PC-9 (cell line): ENCODE measurements at regions of chr2 and their contacts with region 1.

Region 1: DNA sequence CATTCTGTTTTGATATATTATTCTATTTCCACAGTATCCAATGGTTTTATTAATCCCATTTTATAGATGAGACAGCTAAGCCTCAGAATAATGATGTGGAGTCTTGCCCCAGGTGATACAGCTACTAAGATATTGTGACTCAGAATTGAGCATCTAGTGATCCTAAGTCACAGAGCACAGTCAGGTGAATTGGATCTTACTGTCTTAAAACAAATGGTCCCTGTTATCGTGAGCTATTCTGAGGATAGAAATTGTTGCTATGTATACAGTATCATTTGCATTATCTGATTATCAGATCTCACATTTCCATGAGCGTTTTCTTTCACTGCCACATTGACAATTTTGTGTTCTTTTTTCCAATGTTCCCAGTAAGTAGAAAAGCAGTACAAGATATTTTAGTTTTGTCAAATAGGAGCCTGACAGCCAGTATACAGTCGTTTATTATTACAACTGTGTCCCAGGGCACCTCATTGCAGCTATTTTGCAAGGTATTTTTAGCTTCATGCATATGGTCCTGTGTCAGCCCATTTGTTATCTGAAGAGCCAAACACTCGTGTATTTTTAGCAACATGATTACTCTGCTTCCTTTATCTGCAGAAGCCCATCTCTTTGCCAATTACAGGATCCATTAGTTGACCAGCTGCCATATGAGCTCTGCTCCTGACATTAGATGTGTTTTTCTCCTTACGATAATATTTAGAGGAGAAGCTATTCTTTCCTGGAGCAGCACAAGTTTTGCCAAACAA is 25.1 kb upstream of the SGPP2 start:
- DNase-seq: no peak
- H3K4me3 ChIP-seq: no peak overlapping the region
- H3K27ac ChIP-seq: no peak overlapping the region
- H3K4me1 ChIP-seq: no peaks in the 10 kb centered on the region
- H3K27me3 ChIP-seq: no peaks in the 10 kb centered on the region
- CTCF ChIP-seq: no peak

Region 2: DNA sequence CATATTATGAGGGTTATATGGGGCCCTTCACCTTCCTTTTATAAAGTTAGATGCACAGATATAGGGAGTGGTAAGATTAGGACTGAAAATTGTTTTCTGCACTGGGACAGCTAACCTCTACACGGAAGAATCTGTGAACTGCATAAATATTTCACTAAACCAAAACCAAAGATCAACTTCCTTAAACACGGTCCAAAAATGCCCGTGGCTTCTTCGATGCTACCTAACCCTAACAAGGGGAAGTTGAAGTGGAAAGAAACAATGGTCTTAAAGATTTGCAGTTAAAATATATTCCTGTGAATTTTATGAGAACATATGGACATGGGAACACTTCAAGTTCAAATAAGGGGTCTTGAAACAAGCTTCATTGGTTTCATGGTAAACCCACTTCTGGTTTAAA is 67.1 kb before region 1 on chr2:
- CTCF ChIA-PET with region 1: no interaction called
- POLR2A ChIA-PET with region 1: no interaction called
- intact Hi-C with region 1: loop called (anchors 2 kb)
- DNase-seq: no peak
- H3K4me3 ChIP-seq: no peak overlapping the region
- H3K27ac ChIP-seq: no peak overlapping the region
- H3K4me1 ChIP-seq: no peaks in the 10 kb centered on the region
- H3K27me3 ChIP-seq: no peaks in the 10 kb centered on the region
- CTCF ChIP-seq: no peak

Region 3: DNA sequence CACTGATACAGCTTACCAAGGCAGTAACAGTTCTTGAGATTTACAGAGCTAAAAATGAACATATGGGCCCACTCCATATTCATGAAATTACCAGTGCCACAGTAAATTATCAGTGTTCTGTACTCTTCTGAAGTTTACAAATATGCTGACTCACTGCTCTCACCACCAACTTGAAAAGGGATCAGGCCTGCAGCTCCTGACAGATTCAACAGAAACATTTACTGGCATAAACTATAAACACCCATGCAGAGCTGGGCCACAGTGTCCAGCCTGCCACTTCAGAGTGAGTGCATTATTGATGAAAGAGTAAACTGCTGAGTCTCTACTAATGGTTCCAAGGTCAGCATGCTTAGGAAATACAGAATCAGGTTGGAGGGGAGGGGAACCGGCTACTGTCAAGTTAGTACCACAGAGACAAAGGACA is 173.6 kb after region 1 on chr2:
- CTCF ChIA-PET with region 1: no interaction called
- POLR2A ChIA-PET with region 1: no interaction called
- intact Hi-C with region 1: no loop called
- DNase-seq: no peak
- H3K4me3 ChIP-seq: peak overlapping the region; percentile 3; the same call in 1 of the 2 replicates
- H3K27ac ChIP-seq: peak overlapping the region; percentile 87
- H3K4me1 ChIP-seq: peaks cover 65% of the 10 kb centered on the region
- H3K27me3 ChIP-seq: no peaks in the 10 kb centered on the region
- CTCF ChIP-seq: no peak